Mucosa of descending colon (tissue), 3 donors: ENCODE measurements at regions of chr1 and their contacts with region 1.

Region 1: DNA sequence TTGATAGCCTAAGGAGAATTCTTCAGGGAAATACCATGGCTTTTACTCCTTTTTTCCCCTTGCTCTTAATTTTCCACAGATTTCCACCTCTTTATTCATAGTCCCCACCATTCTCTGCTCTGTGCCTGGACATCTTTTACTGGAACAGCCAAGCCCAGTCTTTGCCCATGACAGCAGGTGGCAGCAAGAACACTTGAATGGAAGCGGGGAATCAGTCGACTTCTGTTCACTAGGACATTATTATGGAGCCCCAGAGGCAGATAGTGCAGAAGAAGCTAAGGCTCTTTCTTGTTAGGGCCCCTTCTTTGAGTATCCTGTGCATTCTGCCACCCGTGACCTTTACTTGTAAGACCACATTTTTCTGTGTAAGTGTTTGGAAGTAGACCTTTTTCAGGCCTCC is 6.3 kb downstream of the OR14I1 start:
- DNase-seq: peak in 2 of 3 donors; percentile 61 to 72
- ATAC-seq: peak; percentile 81
- H3K4me3 ChIP-seq: no peak overlapping the region
- H3K4me1 ChIP-seq: no peaks in the 10 kb centered on the region
- CTCF ChIP-seq: no peak

Region 2: GRCh38 chr1:248807067-248807737 is 110.9 kb after region 1 on chr1:
- intact Hi-C with region 1: loop called in 1 of 2 experiments (anchors 2 kb)
- DNase-seq: peak; percentile 69 to 82 (median 70)
- ATAC-seq: peak; percentile 67
- H3K4me3 ChIP-seq: no peak overlapping the region
- H3K4me1 ChIP-seq: peaks cover 31% of the 10 kb centered on the region
- CTCF ChIP-seq: peak; percentile 57